GM10248 (cell line): ENCODE measurements at regions of chr5 and their contacts with region 1.

Region 1: DNA sequence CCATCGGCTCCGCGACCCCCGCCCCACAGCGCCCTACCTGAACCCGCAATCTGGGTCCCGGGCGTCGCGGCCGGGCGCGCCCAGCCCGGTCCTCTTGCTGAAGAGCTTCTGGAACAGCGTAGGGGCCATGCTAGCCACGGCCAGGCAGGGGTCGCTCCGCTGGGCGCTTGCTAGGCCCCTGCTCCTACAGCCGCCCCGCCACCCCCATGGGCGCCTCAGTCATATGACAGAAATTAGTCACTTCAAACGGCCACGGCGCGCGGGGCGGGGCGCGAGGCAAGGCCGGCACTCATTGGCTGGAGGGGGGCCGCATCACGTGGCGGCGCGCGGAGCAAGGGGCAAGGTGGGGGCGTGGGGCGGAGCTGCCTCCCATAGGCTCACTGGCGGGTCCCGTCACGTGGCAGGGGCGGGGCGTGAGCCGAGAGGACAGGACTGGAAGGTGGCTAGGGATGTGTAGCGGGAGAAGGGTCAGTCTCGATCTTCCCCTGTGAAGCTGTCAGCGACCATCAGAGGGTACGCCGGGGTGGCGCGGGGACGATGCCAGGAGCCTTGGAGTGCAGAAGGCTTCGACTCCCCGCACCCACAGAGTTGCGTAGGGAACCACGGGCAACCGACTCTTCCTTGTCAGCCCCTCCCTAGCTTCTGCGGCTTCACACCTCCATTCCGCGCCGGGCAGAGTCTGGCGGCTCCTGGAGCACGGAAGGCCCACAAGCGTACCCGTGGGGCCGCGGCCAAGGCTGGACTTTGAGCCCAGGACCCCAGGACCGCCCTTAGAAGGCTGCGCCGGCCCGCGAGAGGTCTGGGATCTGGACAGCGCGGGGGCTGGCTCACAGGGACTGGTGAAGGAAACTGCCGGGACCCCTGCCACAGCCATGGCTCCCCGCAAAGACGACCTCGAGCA is at the start of gene FNIP1:
- DNase-seq: peak; percentile 99
- CTCF ChIP-seq: no peak

Region 2: GRCh38 chr5:131810510-131811249 is 13.6 kb after region 1 on chr5:
- CTCF ChIA-PET with region 1: interaction called, 19 read pairs
- POLR2A ChIA-PET with region 1: interaction called, 3 read pairs
- DNase-seq: peak; percentile 52
- CTCF ChIP-seq: peak; percentile 58